ENCODE measurements at regions of chr17 and their contacts with region 1.

Region 1: GRCh38 chr17:57783106-57783742 is 38.1 kb upstream of the CCDC182 start:
- DNase-seq: peak; percentile 59
- H3K4me3 ChIP-seq: no peak overlapping the region
- H3K27ac ChIP-seq: no peak overlapping the region
- H3K4me1 ChIP-seq: no peaks in the 10 kb centered on the region
- H3K27me3 ChIP-seq: peaks cover 15 to 21% of the 10 kb centered on the region in 2 experiments
- CTCF ChIP-seq: peak; percentile 95 to 99
- POLR2A ChIP-seq: no peak

Region 2: GRCh38 chr17:57121338-57122042 is 661.7 kb before region 1 on chr17:
- CTCF ChIA-PET with region 1: interaction called, 14 read pairs
- POLR2A ChIA-PET with region 1: no interaction called
- dilution Hi-C with region 1: no loop called
- intact Hi-C with region 1: no loop called
- DNase-seq: peak; percentile 29
- H3K4me3 ChIP-seq: no peak overlapping the region
- H3K27ac ChIP-seq: no peak overlapping the region
- H3K4me1 ChIP-seq: no peaks in the 10 kb centered on the region
- H3K27me3 ChIP-seq: no peaks in the 10 kb centered on the region
- CTCF ChIP-seq: peak; percentile 29 to 64
- POLR2A ChIP-seq: no peak

Region 3: DNA sequence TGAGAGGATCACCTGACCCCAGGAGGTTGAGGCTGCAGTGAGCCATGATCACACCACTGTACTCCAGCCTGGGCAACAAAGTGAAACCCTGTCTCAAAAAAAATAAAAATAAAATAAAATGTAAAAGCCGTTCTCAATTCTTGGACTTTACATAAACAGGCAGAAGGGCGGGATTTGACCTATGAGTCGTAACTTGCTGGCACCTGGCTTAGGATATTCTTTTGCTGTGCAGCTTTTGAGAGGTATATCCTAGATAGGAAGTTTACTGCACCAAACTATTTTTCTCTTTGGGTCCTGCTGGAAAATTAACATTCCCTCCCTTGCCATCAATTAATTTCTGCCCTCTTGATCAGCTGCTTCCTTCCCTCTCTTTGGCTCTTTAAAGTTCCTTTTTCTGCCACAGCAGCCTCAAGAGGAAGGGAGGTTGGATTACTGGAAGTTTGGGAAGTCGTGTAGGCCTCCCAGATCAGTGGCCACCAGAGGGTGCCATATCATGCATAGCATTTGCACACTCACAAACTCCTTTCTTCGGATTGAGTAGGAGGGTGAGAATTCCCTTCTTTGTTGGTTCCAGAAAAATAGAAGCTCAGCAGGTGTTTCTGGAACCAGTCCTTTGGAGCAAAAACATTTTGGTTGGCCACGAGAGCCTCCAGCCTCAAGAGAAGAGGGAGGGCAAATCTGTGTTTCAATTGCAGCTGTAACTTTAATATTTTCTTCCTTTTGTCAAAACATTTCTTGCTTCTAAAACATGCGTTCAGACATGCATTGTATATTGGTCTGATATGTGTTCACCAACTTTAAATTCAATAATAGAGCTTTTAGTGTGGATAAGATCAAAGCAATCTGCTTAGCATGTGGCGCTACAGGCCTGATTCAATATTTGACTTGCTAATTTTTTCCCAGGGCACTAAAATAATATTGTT is 185.4 kb before region 1 on chr17:
- CTCF ChIA-PET with region 1: interaction called, 45 read pairs
- POLR2A ChIA-PET with region 1: no interaction called
- dilution Hi-C with region 1: no loop called
- intact Hi-C with region 1: loop called (anchors 1 kb)
- DNase-seq: peak; percentile 67
- H3K4me3 ChIP-seq: no peak overlapping the region
- H3K27ac ChIP-seq: no peak overlapping the region
- H3K4me1 ChIP-seq: no peaks in the 10 kb centered on the region
- H3K27me3 ChIP-seq: peaks cover 7 to 9% of the 10 kb centered on the region in 2 experiments
- CTCF ChIP-seq: peak; percentile 78 to 79
- POLR2A ChIP-seq: no peak

Region 4: GRCh38 chr17:57685505-57686132 is 97.6 kb before region 1 on chr17:
- CTCF ChIA-PET with region 1: interaction called, 3 read pairs
- POLR2A ChIA-PET with region 1: no interaction called
- dilution Hi-C with region 1: no loop called
- intact Hi-C with region 1: loop called (anchors 5 kb)
- DNase-seq: no peak
- H3K4me3 ChIP-seq: no peak overlapping the region
- H3K27ac ChIP-seq: no peak overlapping the region
- H3K4me1 ChIP-seq: no peaks in the 10 kb centered on the region
- H3K27me3 ChIP-seq: no peaks in the 10 kb centered on the region
- CTCF ChIP-seq: no peak
- POLR2A ChIP-seq: no peak

Region 5: DNA sequence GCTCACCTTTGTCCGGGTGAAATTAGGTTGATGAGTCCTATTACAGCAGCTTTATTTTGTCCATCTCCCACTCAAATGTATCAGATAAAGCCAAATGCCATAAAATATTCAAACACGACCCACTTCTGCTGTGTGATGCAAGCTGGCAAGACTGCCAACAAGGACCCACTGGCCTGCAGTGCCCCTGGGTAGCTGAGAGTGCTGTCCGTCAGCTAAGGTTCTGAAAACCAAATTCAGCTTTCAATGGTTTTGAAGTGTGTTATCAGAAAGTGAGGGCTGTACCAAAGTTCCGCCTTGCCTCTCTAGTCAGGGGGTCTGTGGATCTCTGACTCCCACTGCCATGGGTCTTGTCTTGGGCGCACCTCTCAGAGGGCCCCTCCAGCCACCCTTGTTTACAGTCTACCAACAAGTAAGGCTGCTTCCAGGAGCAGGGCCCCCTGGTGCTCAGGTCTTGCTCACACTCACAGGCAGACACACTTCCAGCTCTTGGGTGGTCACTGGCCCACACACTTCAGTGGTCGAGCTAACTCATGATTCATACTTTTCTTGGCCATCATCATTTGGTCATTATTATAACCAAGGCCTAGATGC is 27.6 kb before region 1 on chr17:
- CTCF ChIA-PET with region 1: interaction called, 10 read pairs
- POLR2A ChIA-PET with region 1: interaction called, 3 read pairs
- dilution Hi-C with region 1: no loop called
- intact Hi-C with region 1: no loop called
- DNase-seq: no peak
- H3K4me3 ChIP-seq: no peak overlapping the region
- H3K27ac ChIP-seq: no peak overlapping the region
- H3K4me1 ChIP-seq: no peaks in the 10 kb centered on the region
- H3K27me3 ChIP-seq: peaks cover 0 to 3% of the 10 kb centered on the region in 2 experiments
- CTCF ChIP-seq: no peak
- POLR2A ChIP-seq: no peak

Region 6: DNA sequence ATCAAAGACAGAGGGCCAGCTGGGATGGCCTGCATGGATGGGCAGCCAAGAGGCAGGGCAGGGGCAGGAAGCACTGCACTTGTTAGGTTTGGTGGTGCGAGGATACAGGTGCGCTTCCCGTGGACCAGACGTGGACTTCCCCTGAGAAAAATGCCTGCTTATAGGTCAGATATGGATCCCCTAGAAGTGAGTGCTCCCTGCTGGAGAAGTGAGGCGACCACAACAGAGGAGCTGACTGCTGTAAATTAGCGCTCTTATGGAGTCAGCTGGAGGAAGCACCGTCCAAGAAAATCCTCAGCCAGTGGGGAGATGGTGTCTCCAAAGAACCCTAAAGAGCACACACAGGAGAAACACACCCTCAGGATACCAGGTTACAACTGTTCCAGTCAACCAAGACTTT is 10.4 kb before region 1 on chr17:
- CTCF ChIA-PET with region 1: interaction called, 57 read pairs
- POLR2A ChIA-PET with region 1: no interaction called
- dilution Hi-C with region 1: no loop called
- intact Hi-C with region 1: no loop called
- DNase-seq: no peak
- H3K4me3 ChIP-seq: no peak overlapping the region
- H3K27ac ChIP-seq: no peak overlapping the region
- H3K4me1 ChIP-seq: peaks cover 19% of the 10 kb centered on the region
- H3K27me3 ChIP-seq: peaks cover 13 to 17% of the 10 kb centered on the region in 2 experiments
- CTCF ChIP-seq: no peak
- POLR2A ChIP-seq: no peak

Region 7: DNA sequence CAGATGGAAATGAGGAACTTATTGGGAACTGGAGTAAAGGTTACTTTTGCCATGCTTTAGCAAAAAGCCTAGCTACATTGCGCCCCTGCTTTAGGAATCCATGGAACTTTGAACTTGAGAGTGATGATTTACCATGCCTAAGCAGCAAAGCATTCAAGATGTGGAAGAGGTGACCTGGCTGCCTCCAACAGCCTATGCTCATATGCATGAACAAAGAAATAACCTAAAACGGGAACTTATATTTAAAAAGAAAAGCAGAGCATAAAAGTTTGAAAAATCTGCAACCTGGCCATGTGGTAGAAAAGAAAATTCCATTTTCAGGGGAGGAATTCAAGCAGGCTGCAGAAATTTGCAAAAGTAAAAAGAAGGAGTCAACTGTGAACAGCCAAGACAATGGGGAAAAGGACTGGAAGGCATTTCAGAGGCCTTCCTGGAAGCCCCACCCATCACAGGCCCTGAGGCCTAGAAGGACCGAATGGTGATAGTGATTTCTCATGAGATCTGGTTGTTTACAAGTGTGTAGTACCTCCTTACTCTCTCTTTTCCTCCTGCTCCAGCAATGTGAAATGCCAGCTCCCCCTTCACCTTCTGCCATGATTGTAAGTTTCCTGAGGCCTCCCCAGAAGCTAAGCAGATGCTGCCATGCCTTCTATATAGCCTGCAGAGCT is 18.0 kb after region 1 on chr17:
- CTCF ChIA-PET with region 1: interaction called, 22 read pairs
- POLR2A ChIA-PET with region 1: no interaction called
- dilution Hi-C with region 1: no loop called
- intact Hi-C with region 1: no loop called
- DNase-seq: no peak
- H3K4me3 ChIP-seq: no peak overlapping the region
- H3K27ac ChIP-seq: no peak overlapping the region
- H3K4me1 ChIP-seq: no peaks in the 10 kb centered on the region
- H3K27me3 ChIP-seq: peaks cover 0 to 2% of the 10 kb centered on the region in 2 experiments
- CTCF ChIP-seq: no peak
- POLR2A ChIP-seq: no peak

Region 8: DNA sequence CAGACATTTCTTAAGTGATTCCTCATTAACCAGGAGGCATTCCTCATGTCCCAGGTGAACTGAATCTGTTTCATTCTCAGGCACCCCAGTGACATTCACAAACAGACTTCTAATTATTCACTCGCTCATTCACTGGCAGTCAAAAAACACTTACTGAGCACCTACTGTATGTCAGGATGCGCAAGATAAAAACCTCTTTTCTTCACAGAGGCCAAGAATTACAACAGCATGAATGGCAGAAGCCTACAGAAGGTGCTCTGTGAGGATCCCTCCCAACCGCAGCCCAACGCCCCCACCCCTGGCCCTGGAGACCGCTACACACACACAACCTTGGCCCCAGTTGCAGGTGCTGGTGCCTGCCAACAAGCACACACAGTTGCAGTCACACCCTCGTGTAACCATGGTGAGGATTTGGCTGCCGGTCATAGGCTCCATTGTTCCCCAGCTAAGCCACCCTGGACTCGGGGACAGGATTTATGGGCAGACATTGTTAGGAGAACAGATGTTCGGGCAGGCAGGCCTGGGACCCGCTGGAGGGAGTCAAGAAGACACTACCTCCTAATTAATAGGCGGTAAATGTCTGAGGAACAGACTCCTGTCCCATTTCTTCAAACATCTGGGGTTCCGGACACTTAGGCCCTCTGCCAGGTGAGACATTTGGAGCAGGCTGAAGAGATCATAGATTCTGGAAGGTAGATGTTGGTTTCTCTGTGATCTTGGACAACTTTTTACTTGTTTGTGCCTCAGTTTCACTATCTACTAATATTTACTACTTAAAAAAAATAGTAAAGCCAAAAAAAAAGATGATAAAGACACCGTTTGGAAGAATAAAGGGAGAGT is 128.8 kb after region 1 on chr17:
- CTCF ChIA-PET with region 1: no interaction called
- POLR2A ChIA-PET with region 1: no interaction called
- dilution Hi-C with region 1: no loop called
- intact Hi-C with region 1: no loop called
- DNase-seq: peak; percentile 89
- H3K4me3 ChIP-seq: no peak overlapping the region
- H3K27ac ChIP-seq: no peak overlapping the region
- H3K4me1 ChIP-seq: peaks cover 13% of the 10 kb centered on the region
- H3K27me3 ChIP-seq: no peaks in the 10 kb centered on the region
- CTCF ChIP-seq: no peak
- POLR2A ChIP-seq: no peak